A549 (cell line): ENCODE measurements at regions of chr3 and their contacts with region 1.

Region 1: DNA sequence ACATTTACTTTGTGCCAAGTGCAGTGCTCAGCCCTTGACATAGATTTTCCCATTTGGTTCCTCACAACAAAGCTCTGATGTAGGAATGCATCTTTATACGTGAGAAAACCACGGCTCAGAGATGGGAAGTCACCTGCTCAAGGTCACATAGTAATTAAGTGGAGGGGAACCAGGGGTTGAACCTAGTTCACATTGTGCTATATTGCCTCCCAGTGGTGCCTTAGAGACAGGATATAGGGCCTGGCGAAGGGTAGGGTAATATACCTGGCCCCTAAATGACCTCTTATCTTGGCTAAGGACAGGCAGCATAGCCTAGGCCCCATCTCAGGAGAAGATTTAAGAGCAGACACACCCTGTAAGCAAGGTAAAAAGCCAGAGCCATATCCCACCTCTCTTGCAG is 71.5 kb downstream of the FOXP1 start:
- DNase-seq: no peak
- ATAC-seq: peak in 1 of 2 experiments; percentile 28; a peak in 3 of 6 replicates
- H3K4me3 ChIP-seq: no peak overlapping the region
- H3K27ac ChIP-seq: peak overlapping the region; percentile 76 to 90
- H3K4me1 ChIP-seq: peaks cover 52% of the 10 kb centered on the region
- CTCF ChIP-seq: peak; percentile 15; the same call in 1 of the 3 replicates
- EP300 ChIP-seq: no peak
- POLR2A ChIP-seq: no peak
- RAD21 ChIP-seq: peak in 1 of 2 experiments; percentile 25; a peak in 2 of 5 replicates

Region 2: GRCh38 chr3:71495708-71496472 is 16.1 kb before region 1 on chr3:
- CTCF ChIA-PET with region 1: interaction called, 7 read pairs
- POLR2A ChIA-PET with region 1: interaction called, 19 read pairs
- DNase-seq: peak; percentile 60 to 77
- ATAC-seq: peak; percentile 94 to 97
- H3K4me3 ChIP-seq: peak overlapping the region; percentile 32
- H3K27ac ChIP-seq: peak overlapping the region; percentile 85 to 93
- H3K4me1 ChIP-seq: peaks cover 33% of the 10 kb centered on the region
- CTCF ChIP-seq: no peak
- EP300 ChIP-seq: peak in 1 of 2 experiments; percentile 51; a peak in 1 of 5 replicates
- POLR2A ChIP-seq: no peak
- RAD21 ChIP-seq: no peak; a peak in 1 of 5 replicates